PC-9 (cell line): ENCODE measurements at regions of chr20 and their contacts with region 1.

Region 1: GRCh38 chr20:10388597-10388996 is 45.4 kb downstream of the MKKS start:
- DNase-seq: no peak
- H3K4me3 ChIP-seq: no peak overlapping the region
- H3K27ac ChIP-seq: no peak overlapping the region
- H3K4me1 ChIP-seq: no peaks in the 10 kb centered on the region
- H3K27me3 ChIP-seq: no peaks in the 10 kb centered on the region
- CTCF ChIP-seq: no peak

Region 2: DNA sequence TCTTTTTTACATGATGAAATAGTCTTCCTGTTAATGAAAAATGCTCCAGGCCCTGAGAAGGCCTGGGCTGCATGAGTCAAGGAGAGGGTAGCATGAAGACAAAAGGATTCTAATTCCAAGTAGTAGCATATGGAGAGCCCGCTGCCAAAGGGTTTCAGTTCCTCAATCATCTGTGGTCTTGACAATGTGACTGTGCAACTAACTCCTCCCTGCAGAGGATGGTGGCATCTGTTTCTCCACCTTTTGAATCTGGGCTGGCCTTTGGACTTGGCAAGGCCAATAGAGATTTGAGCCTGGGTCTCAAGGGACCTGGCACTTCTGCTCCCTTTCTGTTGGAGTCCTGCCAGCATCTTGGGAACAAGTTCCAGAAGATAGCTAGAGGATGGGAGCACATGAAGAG is 389.0 kb before region 1 on chr20:
- CTCF ChIA-PET with region 1: no interaction called
- POLR2A ChIA-PET with region 1: interaction called, 22 read pairs
- intact Hi-C with region 1: no loop called
- DNase-seq: no peak
- H3K4me3 ChIP-seq: no peak overlapping the region
- H3K27ac ChIP-seq: no peak overlapping the region
- H3K4me1 ChIP-seq: no peaks in the 10 kb centered on the region
- H3K27me3 ChIP-seq: no peaks in the 10 kb centered on the region
- CTCF ChIP-seq: no peak

Region 3: DNA sequence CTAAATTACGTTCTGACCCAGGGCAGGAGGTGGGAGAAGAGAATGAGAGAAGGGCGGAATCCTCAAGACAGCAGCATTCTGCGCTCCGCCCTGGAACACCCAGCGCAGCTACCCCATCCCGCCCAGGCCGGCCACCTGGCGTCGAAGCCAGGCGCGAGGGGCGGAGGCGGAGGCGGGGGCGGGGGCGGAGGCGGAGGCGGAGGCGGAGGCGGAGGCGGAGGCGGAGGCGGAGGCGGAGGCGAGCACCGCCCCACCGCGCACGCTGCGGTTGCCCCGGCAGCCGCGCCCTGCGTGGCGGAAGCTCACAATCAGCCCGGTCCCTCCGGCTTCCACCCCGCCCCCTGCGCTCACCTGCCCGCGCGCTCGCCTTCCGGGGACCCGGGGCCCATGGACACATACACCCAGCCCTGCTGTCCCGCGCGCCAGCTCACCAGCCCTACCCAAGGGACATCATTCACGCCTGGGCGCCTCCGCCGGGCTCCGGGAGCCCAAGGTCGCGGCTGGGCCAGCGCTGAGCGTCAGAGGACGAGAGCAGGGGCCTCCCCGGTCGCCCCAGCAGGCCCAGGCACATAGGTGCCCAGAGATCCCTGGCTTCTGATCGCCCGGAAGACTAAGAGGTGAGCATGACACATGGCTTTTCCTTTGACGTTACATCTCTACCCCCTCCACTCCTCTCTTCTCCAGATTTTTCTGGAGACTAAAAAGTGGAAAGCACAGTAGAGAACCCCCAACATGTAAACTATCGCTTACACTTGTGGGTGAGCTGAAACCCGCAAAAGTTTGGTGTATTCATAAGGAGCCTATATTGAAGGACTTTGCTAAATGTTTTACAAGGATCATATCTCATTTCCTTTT is 353.7 kb before region 1 on chr20 and contains the start of gene ANKEF1:
- CTCF ChIA-PET with region 1: no interaction called
- POLR2A ChIA-PET with region 1: interaction called, 12 read pairs
- intact Hi-C with region 1: no loop called
- DNase-seq: peak; percentile 75 to 96
- H3K4me3 ChIP-seq: peak within 1 kb of the TSS; percentile 79
- H3K27ac ChIP-seq: peak within 1 kb of the TSS; percentile 60
- H3K4me1 ChIP-seq: peaks cover 14% of the 10 kb centered on the region; the same call in 1 of the 2 replicates
- H3K27me3 ChIP-seq: no peaks in the 10 kb centered on the region
- CTCF ChIP-seq: no peak
- total RNA-seq, gene ANKEF1: 9.5 and 11.1 TPM in 2 replicates

Region 4: GRCh38 chr20:10074513-10074912 is 314.1 kb before region 1 on chr20:
- CTCF ChIA-PET with region 1: no interaction called
- POLR2A ChIA-PET with region 1: no interaction called
- intact Hi-C with region 1: no loop called
- DNase-seq: peak; percentile 48 to 92
- H3K4me3 ChIP-seq: no peak overlapping the region
- H3K27ac ChIP-seq: no peak overlapping the region
- H3K4me1 ChIP-seq: peaks cover 30% of the 10 kb centered on the region
- H3K27me3 ChIP-seq: no peaks in the 10 kb centered on the region
- CTCF ChIP-seq: no peak